ENCODE measurements at regions of chrX and their contacts with region 1.

Region 1: DNA sequence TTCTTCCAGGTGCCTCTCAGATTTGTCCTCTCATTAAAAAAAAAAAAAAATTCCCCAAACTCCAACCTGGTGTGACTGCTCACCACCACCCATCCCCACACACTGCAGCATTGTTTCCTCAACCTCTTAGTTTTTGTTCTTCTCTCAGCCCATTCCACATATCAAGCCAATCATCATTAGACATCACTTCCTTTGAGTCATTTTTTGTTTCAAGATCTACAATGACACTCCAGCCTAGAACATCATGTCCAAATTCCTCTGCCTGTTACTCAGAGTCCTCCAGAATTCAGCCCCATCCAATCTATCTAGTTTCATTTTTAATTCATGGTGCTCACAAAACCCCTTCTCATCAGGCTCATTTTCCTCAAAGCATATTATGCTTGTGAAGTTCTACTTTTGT is 262.5 kb upstream of the TEX13A start:
- DNase-seq: no peak
- ATAC-seq: no peak

Region 2: DNA sequence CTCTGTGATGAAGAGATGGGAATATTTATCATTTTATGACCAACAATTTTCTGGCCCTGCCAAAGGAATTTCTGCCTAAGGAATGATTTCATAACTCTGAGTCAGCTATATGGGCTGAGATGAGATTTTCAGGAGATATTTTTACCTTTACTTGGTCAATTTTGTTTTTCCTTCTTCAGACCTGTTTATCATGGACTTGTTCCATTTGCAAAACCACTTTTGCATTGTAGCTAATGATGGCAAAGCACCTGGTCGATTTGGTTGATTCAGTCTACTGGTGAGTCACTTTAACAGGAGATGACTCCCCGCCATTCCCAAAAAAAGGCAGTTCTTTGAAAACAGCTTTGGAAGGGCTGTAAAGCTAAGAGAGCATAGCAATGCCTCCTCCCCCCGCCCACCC is 315.8 kb before region 1 on chrX:
- intact Hi-C with region 1: no loop called
- DNase-seq: no peak
- ATAC-seq: no peak

Region 3: GRCh38 chrX:105527759-105528158 is 44.7 kb after region 1 on chrX:
- intact Hi-C with region 1: loop called (anchors 5 kb)
- DNase-seq: no peak
- ATAC-seq: no peak